ENCODE measurements at regions of chr17 and their contacts with region 1.

Region 1: GRCh38 chr17:50615828-50616227 is 18.9 kb upstream of the ABCC3 start:
- DNase-seq: no peak
- ATAC-seq: no peak
- H3K4me3 ChIP-seq: no peak overlapping the region
- H3K27ac ChIP-seq: no peak overlapping the region
- H3K4me1 ChIP-seq: no peaks in the 10 kb centered on the region
- H3K27me3 ChIP-seq: no peaks in the 10 kb centered on the region

Region 2: DNA sequence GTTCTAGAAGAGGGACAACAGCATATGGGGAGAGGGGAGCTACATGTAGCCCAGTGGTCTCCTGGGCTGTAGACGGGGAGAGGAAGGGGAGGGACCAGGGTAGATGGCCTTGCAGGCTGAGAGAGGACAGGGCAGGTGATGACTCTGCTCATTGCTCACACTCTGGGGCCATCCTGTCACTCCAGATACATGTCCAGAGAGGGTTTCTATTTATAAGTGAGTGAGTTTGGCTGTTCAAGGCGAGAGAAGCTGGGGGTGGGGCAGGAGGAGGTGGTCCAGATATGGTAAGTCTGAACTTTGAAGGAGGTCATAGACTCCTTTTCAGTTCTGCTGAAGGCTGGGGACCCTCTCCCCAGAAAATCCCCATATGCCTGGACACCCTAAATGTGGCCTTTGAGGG is 33.1 kb before region 1 on chr17:
- intact Hi-C with region 1: loop called in 1 of 2 experiments (anchors 1 kb)
- DNase-seq: no peak
- ATAC-seq: no peak
- H3K4me3 ChIP-seq: no peak overlapping the region
- H3K27ac ChIP-seq: no peak overlapping the region
- H3K4me1 ChIP-seq: no peaks in the 10 kb centered on the region
- H3K27me3 ChIP-seq: no peaks in the 10 kb centered on the region

Measured in aorta (tissue), 5 donors.